ENCODE measurements at regions of chrX and their contacts with region 1.

Region 1: GRCh38 chrX:136920001-136920400 is 39.5 kb upstream of the RBMX start:
- DNase-seq: no peak
- H3K4me3 Mint-ChIP-seq: no peak overlapping the region
- H3K27ac Mint-ChIP-seq: no peak overlapping the region
- H3K4me1 Mint-ChIP-seq: peaks cover 2% of the 10 kb centered on the region
- H3K27me3 Mint-ChIP-seq: no peaks in the 10 kb centered on the region

Region 2: DNA sequence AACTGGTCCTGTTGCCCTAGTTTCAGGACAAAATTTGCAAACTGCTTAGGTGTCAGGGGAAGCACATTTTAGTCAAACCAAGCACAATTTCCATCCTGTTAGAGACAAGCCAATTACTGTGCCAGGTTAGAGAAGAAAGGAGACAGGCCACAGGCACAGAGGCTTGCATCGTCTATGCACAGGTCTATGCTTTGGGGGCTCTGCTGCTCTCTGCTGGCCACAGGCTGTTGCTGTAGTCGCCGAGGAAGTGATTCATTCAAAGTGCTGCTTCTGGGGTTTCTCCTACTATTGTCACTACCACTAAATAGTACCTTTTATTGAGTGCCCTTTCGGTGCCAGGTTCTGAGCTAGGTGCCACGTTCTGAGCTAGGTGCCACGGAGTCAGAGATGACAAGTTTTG is 342.4 kb before region 1 on chrX:
- CTCF ChIA-PET with region 1: no interaction called
- intact Hi-C with region 1: loop called (anchors 2 kb)
- DNase-seq: peak; percentile 82
- H3K4me3 Mint-ChIP-seq: peak overlapping the region; percentile 4
- H3K27ac Mint-ChIP-seq: peak overlapping the region; percentile 23
- H3K4me1 Mint-ChIP-seq: peaks cover 37% of the 10 kb centered on the region
- H3K27me3 Mint-ChIP-seq: no peaks in the 10 kb centered on the region

Region 3: DNA sequence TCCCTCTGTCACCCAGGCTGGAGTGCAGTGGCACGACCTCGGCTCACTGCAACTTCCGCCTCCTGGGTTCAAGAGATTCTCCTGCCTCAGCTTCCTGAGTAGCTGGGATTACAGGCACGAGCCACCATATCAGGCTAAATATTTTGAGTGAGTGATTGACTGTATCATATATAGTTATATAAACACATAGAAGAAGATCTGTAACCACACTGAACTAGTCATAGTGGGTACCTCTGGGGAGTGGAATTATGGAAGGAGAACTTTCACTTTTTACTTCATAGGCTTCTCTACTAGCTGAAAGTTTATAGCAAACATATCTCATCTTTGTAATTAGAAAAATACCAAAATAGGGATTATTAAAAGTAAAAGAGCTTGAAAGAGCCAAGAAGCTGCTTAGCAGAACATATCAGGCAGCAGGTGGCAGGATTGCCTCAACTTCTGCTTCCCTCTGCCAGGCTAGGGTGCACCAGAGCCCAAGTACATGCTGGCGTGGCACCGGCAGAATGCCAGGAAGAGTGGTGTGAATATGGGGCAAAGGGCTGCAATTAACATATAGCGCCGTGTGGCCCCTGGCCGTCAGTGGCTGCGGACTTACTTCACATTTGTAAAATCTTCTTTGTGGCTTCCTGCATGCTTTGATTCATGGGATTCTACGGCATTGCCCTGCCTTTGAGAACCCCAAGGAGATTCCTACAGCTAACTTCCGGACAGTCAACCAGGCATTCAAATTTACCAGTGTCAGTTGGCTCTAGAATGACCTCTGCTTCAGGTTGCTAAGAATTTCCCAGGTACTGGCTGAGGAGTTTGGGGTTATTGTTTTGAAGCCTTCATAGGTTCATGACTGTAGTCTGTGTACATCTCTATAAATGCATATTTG is 311.5 kb before region 1 on chrX:
- CTCF ChIA-PET with region 1: interaction called, 3 read pairs
- intact Hi-C with region 1: loop called (anchors 1 kb)
- DNase-seq: peak; percentile 80
- H3K4me3 Mint-ChIP-seq: peak overlapping the region; percentile 46
- H3K27ac Mint-ChIP-seq: peak overlapping the region; percentile 79
- H3K4me1 Mint-ChIP-seq: peaks cover 54% of the 10 kb centered on the region
- H3K27me3 Mint-ChIP-seq: no peaks in the 10 kb centered on the region

Region 4: GRCh38 chrX:136658151-136658550 is 261.9 kb before region 1 on chrX:
- CTCF ChIA-PET with region 1: no interaction called
- intact Hi-C with region 1: loop called (anchors 5 kb)
- DNase-seq: peak; percentile 34
- H3K4me3 Mint-ChIP-seq: peak overlapping the region; percentile 96
- H3K27ac Mint-ChIP-seq: peak overlapping the region; percentile 100
- H3K4me1 Mint-ChIP-seq: peaks cover 74% of the 10 kb centered on the region
- H3K27me3 Mint-ChIP-seq: no peaks in the 10 kb centered on the region

Measured in activated naive CD4-positive, alpha-beta T cell treated with anti-CD3 and anti-CD28 coated beads for 36 hours (primary cell).